B cell (primary cell): ENCODE measurements at regions of chr7 and their contacts with region 1.

Region 1: DNA sequence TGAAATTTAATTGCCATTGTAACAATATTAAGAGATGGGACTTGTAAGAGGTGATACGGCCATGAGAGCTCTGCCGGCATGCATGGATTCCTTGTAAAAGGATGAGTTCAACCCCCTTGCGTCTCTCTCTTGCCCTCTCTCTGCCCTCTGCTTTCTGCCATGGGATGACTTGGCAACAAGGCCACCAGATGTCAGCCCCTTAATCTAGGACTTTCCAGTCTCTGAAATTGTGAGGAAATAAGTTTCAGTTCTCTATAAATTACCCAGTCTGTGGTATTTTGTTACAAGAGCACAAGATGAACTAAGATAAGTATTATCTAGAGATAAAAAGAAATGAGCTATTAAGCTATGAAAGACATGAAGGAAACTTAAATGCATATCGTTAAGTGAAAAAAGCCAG is 145.7 kb upstream of the AHR start:
- DNase-seq: peak; percentile 32
- ATAC-seq: peak; percentile 69
- H3K4me3 ChIP-seq: no peak overlapping the region
- H3K4me3 Mint-ChIP-seq: no peak overlapping the region
- H3K27ac ChIP-seq: no peak overlapping the region
- H3K27ac Mint-ChIP-seq: peak overlapping the region; percentile 57
- H3K4me1 ChIP-seq: peaks cover 0 to 4% of the 10 kb centered on the region in 2 donors
- H3K4me1 Mint-ChIP-seq: peaks cover 19% of the 10 kb centered on the region
- H3K27me3 ChIP-seq: no peaks in the 10 kb centered on the region
- H3K27me3 Mint-ChIP-seq: no peaks in the 10 kb centered on the region
- CTCF ChIP-seq: no peak

Region 2: GRCh38 chr7:15571301-15571878 is 1581.3 kb before region 1 on chr7:
- CTCF ChIA-PET with region 1: no interaction called
- POLR2A ChIA-PET with region 1: no interaction called
- intact Hi-C with region 1: no loop called
- DNase-seq: no peak
- ATAC-seq: no peak
- H3K4me3 ChIP-seq: no peak overlapping the region
- H3K4me3 Mint-ChIP-seq: no peak overlapping the region
- H3K27ac ChIP-seq: no peak overlapping the region
- H3K27ac Mint-ChIP-seq: no peak overlapping the region
- H3K4me1 ChIP-seq: no peaks in the 10 kb centered on the region
- H3K4me1 Mint-ChIP-seq: no peaks in the 10 kb centered on the region
- H3K27me3 ChIP-seq: no peaks in the 10 kb centered on the region
- H3K27me3 Mint-ChIP-seq: no peaks in the 10 kb centered on the region
- CTCF ChIP-seq: no peak

Region 3: GRCh38 chr7:17234398-17235031 is 81.8 kb after region 1 on chr7:
- CTCF ChIA-PET with region 1: no interaction called
- POLR2A ChIA-PET with region 1: no interaction called
- intact Hi-C with region 1: loop called (anchors 10 kb)
- DNase-seq: peak; percentile 75
- ATAC-seq: peak; percentile 85
- H3K4me3 ChIP-seq: peak overlapping the region in 2 of 5 experiments; percentile 16 to 50
- H3K4me3 Mint-ChIP-seq: peak overlapping the region; percentile 79
- H3K27ac ChIP-seq: peak overlapping the region; percentile 57 to 66
- H3K27ac Mint-ChIP-seq: peak overlapping the region; percentile 97
- H3K4me1 ChIP-seq: peaks cover 17 to 19% of the 10 kb centered on the region in 2 donors
- H3K4me1 Mint-ChIP-seq: peaks cover 21% of the 10 kb centered on the region
- H3K27me3 ChIP-seq: no peaks in the 10 kb centered on the region
- H3K27me3 Mint-ChIP-seq: no peaks in the 10 kb centered on the region
- CTCF ChIP-seq: no peak

Region 4: GRCh38 chr7:17732083-17732482 is 579.4 kb after region 1 on chr7:
- CTCF ChIA-PET with region 1: no interaction called
- POLR2A ChIA-PET with region 1: no interaction called
- intact Hi-C with region 1: no loop called
- DNase-seq: no peak
- ATAC-seq: no peak
- H3K4me3 ChIP-seq: no peak overlapping the region
- H3K4me3 Mint-ChIP-seq: no peak overlapping the region
- H3K27ac ChIP-seq: no peak overlapping the region
- H3K27ac Mint-ChIP-seq: no peak overlapping the region
- H3K4me1 ChIP-seq: no peaks in the 10 kb centered on the region
- H3K4me1 Mint-ChIP-seq: no peaks in the 10 kb centered on the region
- H3K27me3 ChIP-seq: no peaks in the 10 kb centered on the region
- H3K27me3 Mint-ChIP-seq: peaks cover 16% of the 10 kb centered on the region
- CTCF ChIP-seq: no peak